ENCODE measurements at regions of chr1 and their contacts with region 1.

Region 1: GRCh38 chr1:208631092-208631491 is 386.9 kb upstream of the PLXNA2 start:
- DNase-seq: no peak
- ATAC-seq: no peak
- H3K4me3 ChIP-seq: no peak overlapping the region
- H3K4me3 Mint-ChIP-seq: no peak overlapping the region
- H3K27ac ChIP-seq: no peak overlapping the region
- H3K27ac Mint-ChIP-seq: no peak overlapping the region
- H3K4me1 ChIP-seq: no peaks in the 10 kb centered on the region
- H3K4me1 Mint-ChIP-seq: no peaks in the 10 kb centered on the region
- H3K27me3 ChIP-seq: no peaks in the 10 kb centered on the region
- H3K27me3 Mint-ChIP-seq: peaks cover 0 to 12% (median 0%) of the 10 kb centered on the region in 5 donors

Region 2: DNA sequence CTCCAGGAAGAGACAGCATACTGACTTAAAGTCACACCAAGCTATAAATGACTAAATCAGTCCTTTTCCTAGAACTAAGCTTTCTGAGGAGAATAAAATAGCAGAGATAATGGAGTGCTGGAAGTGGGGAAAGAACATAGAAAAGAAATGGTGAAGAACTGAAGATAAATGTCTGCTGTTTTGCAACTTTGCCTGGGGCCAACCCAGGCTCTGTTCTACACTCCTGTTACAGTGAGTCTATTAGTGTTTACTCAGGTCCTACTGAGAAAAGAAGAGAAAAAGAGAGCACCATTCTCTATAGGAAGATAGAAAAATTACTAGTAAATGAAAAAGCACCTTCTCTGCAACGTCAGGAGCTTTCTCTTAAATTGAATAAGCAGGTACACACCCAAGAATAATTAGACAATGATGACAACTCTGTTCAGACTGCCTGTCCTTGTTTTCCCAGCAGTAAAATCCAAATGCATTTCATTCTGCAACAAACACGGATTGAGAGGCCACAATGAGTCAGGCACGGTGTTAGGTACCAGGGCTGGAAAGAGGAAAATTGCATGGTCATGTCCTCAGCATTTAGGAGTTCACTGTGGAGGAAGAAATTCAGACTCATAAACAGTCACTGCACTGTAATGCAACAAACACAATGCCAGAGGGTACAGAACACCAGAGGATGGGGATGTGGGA is 813.0 kb after region 1 on chr1:
- CTCF ChIA-PET with region 1: no interaction called
- POLR2A ChIA-PET with region 1: no interaction called
- intact Hi-C with region 1: loop called in 1 of 2 experiments (anchors 5 kb)
- DNase-seq: no peak
- ATAC-seq: no peak
- H3K4me3 ChIP-seq: no peak overlapping the region
- H3K4me3 Mint-ChIP-seq: no peak overlapping the region
- H3K27ac ChIP-seq: no peak overlapping the region
- H3K27ac Mint-ChIP-seq: no peak overlapping the region
- H3K4me1 ChIP-seq: no peaks in the 10 kb centered on the region
- H3K4me1 Mint-ChIP-seq: no peaks in the 10 kb centered on the region
- H3K27me3 ChIP-seq: no peaks in the 10 kb centered on the region
- H3K27me3 Mint-ChIP-seq: peaks cover 2 to 9% (median 4%) of the 10 kb centered on the region in 5 donors

Measured in naive thymus-derived CD4-positive, alpha-beta T cell (primary cell).